ENCODE measurements at regions of chr17 and their contacts with region 1.

Region 1: GRCh38 chr17:48791128-48792032 is 25.6 kb downstream of the TTLL6 start:
- DNase-seq: peak; percentile 79
- H3K4me3 ChIP-seq: no peak overlapping the region
- H3K27ac ChIP-seq: no peak overlapping the region
- H3K4me1 ChIP-seq: no peaks in the 10 kb centered on the region
- H3K27me3 ChIP-seq: peaks cover 0 to 65% of the 10 kb centered on the region in 2 donors
- CTCF ChIP-seq: peak; percentile 59 to 69

Region 2: GRCh38 chr17:48678141-48678971 is 113.0 kb before region 1 on chr17:
- intact Hi-C with region 1: loop called (anchors 5 kb)
- DNase-seq: peak; percentile 29 to 66
- H3K4me3 ChIP-seq: no peak overlapping the region
- H3K27ac ChIP-seq: no peak overlapping the region
- H3K4me1 ChIP-seq: peaks cover 0 to 6% (median 2%) of the 10 kb centered on the region in 4 donors
- H3K27me3 ChIP-seq: peaks cover 0 to 78% of the 10 kb centered on the region in 2 donors
- CTCF ChIP-seq: peak; percentile 69 to 85

Region 3: GRCh38 chr17:48724251-48725003 is 67.0 kb before region 1 on chr17:
- intact Hi-C with region 1: loop called (anchors 5 kb)
- DNase-seq: peak; percentile 82 to 83
- H3K4me3 ChIP-seq: no peak overlapping the region
- H3K27ac ChIP-seq: no peak overlapping the region
- H3K4me1 ChIP-seq: peaks cover 0 to 40% (median 27%) of the 10 kb centered on the region in 4 donors
- H3K27me3 ChIP-seq: peaks cover 13 to 100% of the 10 kb centered on the region in 2 donors
- CTCF ChIP-seq: peak; percentile 53 to 56

Region 4: GRCh38 chr17:48850792-48851323 is 59.5 kb after region 1 on chr17:
- intact Hi-C with region 1: no loop called
- DNase-seq: no peak
- H3K4me3 ChIP-seq: no peak overlapping the region
- H3K27ac ChIP-seq: no peak overlapping the region
- H3K4me1 ChIP-seq: no peaks in the 10 kb centered on the region
- H3K27me3 ChIP-seq: no peaks in the 10 kb centered on the region
- CTCF ChIP-seq: no peak